Mammary epithelial cell (primary cell): ENCODE measurements at regions of chr18 and their contacts with region 1.

Region 1: DNA sequence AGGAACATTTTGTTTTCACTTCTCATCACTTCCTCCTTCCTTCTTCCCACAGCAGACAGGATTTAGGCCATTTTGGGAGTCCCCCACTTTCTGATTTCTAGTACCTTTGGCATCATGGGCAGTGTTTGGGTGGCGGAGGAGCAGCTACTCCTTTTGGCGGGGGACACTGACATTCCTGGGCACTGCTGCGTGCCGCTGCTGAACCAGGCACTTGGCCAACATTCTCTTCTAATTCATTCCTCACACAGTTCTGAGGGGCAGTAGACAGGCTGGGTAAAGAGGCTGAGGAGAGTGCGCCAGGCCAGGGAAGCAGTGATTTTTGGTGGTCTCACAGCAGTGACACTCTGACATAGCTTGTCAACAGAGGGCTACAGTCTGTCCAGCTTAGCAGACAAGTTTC is 270.2 kb downstream of the LOXHD1 start:
- DNase-seq: no peak
- H3K4me3 ChIP-seq: no peak overlapping the region
- H3K27ac ChIP-seq: no peak overlapping the region
- H3K4me1 ChIP-seq: peaks cover 26% of the 10 kb centered on the region
- H3K27me3 ChIP-seq: no peaks in the 10 kb centered on the region
- CTCF ChIP-seq: no peak

Region 2: DNA sequence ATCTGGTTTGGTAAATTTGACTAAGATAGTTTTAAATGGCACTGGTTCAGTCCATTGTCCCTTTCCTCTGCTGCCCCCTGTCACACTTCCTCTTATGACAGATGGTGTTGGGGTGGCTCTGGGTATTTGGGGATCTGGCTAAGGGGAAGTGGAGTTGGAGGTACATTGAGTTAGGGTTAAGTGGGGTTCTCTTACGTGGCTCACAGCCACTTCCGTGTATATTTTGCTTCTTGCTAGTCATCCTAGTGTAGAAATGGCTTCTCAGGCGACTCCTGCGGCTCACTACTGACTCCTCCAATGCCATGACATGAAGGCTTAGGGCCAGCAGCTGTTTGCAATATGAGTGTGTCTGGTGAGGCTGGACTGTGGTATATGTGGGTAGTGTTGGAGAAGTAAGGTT is 95.6 kb before region 1 on chr18:
- CTCF ChIA-PET with region 1: no interaction called
- dilution Hi-C with region 1: no loop called
- in situ Hi-C with region 1: no loop called
- intact Hi-C with region 1: loop called (anchors 5 kb)
- DNase-seq: no peak
- H3K4me3 ChIP-seq: no peak overlapping the region
- H3K27ac ChIP-seq: no peak overlapping the region
- H3K4me1 ChIP-seq: no peaks in the 10 kb centered on the region
- H3K27me3 ChIP-seq: no peaks in the 10 kb centered on the region
- CTCF ChIP-seq: no peak

Region 3: DNA sequence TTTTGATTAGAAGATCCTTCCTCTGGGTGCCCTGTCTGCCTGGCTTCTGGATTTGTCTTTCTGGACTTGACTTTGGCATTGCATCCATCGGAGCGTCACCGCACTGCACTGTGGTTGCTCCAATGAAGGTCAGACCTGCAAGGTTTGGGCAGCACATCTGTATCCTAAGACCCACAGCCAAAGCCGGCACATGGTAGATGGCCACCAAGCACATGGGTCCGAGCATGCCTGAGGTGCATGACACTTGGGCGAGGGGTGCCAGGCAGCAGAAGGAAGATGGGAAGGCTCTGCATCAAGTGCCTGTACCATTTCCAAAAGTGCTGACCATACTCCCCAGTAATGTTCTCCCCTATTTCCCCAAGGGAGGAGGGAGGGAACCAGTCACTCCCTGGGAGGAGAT is 120.2 kb after region 1 on chr18:
- CTCF ChIA-PET with region 1: no interaction called
- dilution Hi-C with region 1: no loop called
- in situ Hi-C with region 1: no loop called
- intact Hi-C with region 1: no loop called
- DNase-seq: no peak
- H3K4me3 ChIP-seq: no peak overlapping the region
- H3K27ac ChIP-seq: no peak overlapping the region
- H3K4me1 ChIP-seq: no peaks in the 10 kb centered on the region
- H3K27me3 ChIP-seq: no peaks in the 10 kb centered on the region
- CTCF ChIP-seq: no peak